ENCODE measurements at regions of chr5 and their contacts with region 1.

Region 1: DNA sequence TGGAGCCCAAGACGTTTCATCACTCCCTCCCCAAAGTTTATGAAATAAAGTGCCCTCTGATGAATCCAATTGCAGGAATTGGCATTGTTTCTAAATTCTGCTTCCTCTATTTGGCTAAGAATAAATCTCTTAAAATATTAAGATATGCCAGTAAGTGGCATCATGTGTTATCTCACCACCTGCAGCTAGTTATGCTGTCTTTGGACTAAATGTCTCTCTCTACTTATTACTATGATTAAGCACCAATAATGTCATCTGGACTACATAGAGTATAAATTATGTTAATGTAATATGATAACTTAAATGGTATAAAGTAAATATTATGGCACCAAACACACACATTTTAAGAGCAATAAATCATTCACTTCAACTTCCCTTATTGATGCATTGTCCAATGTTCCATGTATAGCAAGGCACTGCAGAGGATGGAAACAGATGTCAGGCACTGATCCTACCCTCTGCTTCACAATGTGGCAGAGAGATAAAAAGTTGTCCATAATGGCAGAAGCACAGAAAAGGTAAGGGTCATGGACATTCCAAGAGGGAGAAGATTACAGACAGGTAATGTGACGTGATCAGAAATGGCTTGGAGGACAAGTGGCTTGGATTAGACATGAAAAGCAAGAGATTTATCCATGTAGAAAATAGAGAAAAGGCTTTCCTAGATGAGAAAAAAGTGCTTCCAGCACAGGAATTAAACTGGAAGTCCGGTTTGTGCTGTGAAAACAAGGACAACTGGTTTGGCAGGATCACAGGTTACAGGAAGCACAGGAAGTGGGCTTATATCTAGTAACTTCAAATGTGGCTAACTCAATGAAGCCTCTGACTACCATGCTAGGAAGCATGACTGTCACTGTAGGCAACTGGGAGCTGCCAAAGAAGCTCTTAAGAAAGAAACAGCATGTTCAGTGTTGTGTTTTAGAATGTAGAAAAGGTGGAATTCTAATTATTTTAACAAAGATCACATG is 26.7 kb downstream of the MARCHF11 start:
- DNase-seq: no peak
- H3K4me3 ChIP-seq: no peak overlapping the region
- H3K27ac ChIP-seq: no peak overlapping the region
- H3K4me1 ChIP-seq: no peaks in the 10 kb centered on the region
- H3K27me3 ChIP-seq: no peaks in the 10 kb centered on the region

Region 2: GRCh38 chr5:16456103-16456832 is 303.4 kb after region 1 on chr5:
- in situ Hi-C with region 1: loop called (anchors 10 kb)
- DNase-seq: peak; percentile 81
- H3K4me3 ChIP-seq: no peak overlapping the region
- H3K27ac ChIP-seq: peak overlapping the region; percentile 76
- H3K4me1 ChIP-seq: peaks cover 48% of the 10 kb centered on the region
- H3K27me3 ChIP-seq: no peaks in the 10 kb centered on the region

Measured in GM23248 (cell line).